CD4-positive, alpha-beta T cell (primary cell): ENCODE measurements at regions of chr10 and their contacts with region 1.

Region 1: GRCh38 chr10:100373298-100374136 is 26.5 kb downstream of the SCD start:
- DNase-seq: peak; percentile 58 to 91 (median 73)
- ATAC-seq: peak; percentile 69
- H3K4me3 ChIP-seq: peak overlapping the region; percentile 81
- H3K4me3 Mint-ChIP-seq: no peak overlapping the region
- H3K27ac ChIP-seq: peak overlapping the region; percentile 78 to 90
- H3K27ac Mint-ChIP-seq: no peak overlapping the region
- H3K4me1 ChIP-seq: peaks cover 49% of the 10 kb centered on the region
- H3K4me1 Mint-ChIP-seq: peaks cover 24% of the 10 kb centered on the region
- H3K27me3 ChIP-seq: no peaks in the 10 kb centered on the region
- H3K27me3 Mint-ChIP-seq: no peaks in the 10 kb centered on the region
- CTCF ChIP-seq: no peak

Region 2: DNA sequence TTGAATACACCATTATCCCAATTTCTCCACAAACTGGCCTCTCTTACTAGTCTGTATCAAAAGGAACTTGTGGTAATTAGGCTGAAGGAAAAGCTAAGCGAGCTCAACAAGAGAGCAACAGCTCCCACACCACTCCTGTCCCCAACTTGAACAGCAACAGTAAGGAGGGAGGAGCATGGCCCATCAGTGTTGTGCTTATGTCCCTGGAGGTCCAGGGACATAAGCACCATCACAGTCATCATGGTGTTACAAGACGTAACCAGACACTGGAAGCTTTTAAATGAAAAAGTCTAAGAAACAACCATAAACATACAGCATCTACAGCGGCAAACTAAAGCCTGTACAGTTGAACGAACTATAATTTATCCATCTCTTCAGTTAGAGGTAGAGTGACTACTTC is 188.7 kb before region 1 on chr10:
- CTCF ChIA-PET with region 1: no interaction called
- POLR2A ChIA-PET with region 1: no interaction called
- intact Hi-C with region 1: no loop called
- DNase-seq: peak in 2 of 14 experiments; percentile 21 to 25
- ATAC-seq: no peak
- H3K4me3 ChIP-seq: peak overlapping the region; percentile 80
- H3K4me3 Mint-ChIP-seq: peak overlapping the region; percentile 98
- H3K27ac ChIP-seq: peak overlapping the region; percentile 72 to 81
- H3K27ac Mint-ChIP-seq: peak overlapping the region; percentile 92
- H3K4me1 ChIP-seq: peaks cover 22% of the 10 kb centered on the region
- H3K4me1 Mint-ChIP-seq: peaks cover 78% of the 10 kb centered on the region
- H3K27me3 ChIP-seq: no peaks in the 10 kb centered on the region
- H3K27me3 Mint-ChIP-seq: no peaks in the 10 kb centered on the region
- CTCF ChIP-seq: no peak

Region 3: DNA sequence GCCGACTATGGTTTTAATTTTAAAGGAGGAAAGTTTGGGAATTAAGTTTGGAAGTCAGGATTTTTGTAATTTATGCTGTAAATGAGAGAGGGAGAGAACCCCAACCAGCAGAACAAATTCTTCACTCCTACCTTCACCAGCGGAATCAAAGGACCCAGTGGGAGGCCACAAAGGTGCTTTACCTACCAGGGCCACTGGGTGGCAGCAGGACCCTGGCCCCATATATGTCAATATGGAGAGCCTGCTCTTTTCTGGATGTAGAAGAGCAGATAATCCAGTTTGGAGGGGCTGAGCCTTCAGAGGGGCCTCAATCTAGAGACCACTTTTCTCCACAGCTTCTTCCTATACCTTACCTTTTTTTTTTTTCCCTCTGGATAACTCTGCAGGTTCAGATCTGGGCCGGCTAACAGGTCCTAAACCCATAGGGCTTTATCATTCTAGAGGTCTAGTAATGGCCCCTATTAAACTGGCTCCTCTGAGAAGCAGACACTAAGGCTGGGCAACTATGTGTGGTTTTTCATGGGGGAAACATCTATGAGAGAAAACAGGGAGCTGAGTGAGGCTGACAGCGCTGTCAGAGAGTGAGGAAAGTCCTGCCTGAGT is 35.0 kb before region 1 on chr10:
- CTCF ChIA-PET with region 1: interaction called, 4 read pairs
- POLR2A ChIA-PET with region 1: no interaction called
- intact Hi-C with region 1: loop called in 1 of 2 experiments (anchors 2 kb)
- DNase-seq: peak; percentile 66 to 85 (median 76)
- ATAC-seq: peak; percentile 94
- H3K4me3 ChIP-seq: no peak overlapping the region
- H3K4me3 Mint-ChIP-seq: no peak overlapping the region
- H3K27ac ChIP-seq: no peak overlapping the region
- H3K27ac Mint-ChIP-seq: no peak overlapping the region
- H3K4me1 ChIP-seq: no peaks in the 10 kb centered on the region
- H3K4me1 Mint-ChIP-seq: no peaks in the 10 kb centered on the region
- H3K27me3 ChIP-seq: no peaks in the 10 kb centered on the region
- H3K27me3 Mint-ChIP-seq: peaks cover 4% of the 10 kb centered on the region
- CTCF ChIP-seq: peak; percentile 87

Region 4: DNA sequence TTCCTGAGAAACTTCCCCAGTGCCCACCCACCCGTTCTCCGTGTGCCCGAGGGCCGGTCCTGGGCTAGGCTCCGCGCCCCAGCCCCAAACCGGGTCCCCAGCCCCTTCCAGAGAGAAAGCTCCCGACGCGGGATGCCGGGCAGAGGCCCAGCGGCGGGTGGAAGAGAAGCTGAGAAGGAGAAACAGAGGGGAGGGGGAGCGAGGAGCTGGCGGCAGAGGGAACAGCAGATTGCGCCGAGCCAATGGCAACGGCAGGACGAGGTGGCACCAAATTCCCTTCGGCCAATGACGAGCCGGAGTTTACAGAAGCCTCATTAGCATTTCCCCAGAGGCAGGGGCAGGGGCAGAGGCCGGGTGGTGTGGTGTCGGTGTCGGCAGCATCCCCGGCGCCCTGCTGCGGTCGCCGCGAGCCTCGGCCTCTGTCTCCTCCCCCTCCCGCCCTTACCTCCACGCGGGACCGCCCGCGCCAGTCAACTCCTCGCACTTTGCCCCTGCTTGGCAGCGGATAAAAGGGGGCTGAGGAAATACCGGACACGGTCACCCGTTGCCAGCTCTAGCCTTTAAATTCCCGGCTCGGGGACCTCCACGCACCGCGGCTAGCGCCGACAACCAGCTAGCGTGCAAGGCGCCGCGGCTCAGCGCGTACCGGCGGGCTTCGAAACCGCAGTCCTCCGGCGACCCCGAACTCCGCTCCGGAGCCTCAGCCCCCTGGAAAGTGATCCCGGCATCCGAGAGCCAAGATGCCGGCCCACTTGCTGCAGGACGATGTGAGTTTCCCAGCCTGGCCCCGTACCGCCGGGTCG is 26.6 kb before region 1 on chr10 and contains the start of gene SCD:
- CTCF ChIA-PET with region 1: interaction called, 3 read pairs
- POLR2A ChIA-PET with region 1: interaction called, 15 read pairs
- intact Hi-C with region 1: loop called (anchors 1 to 2 kb)
- DNase-seq: peak; percentile 48 to 91 (median 62)
- ATAC-seq: peak; percentile 83
- H3K4me3 ChIP-seq: peak within 1 kb of the TSS; percentile 64
- H3K4me3 Mint-ChIP-seq: peak within 1 kb of the TSS; percentile 86
- H3K27ac ChIP-seq: no peak within 1 kb of the TSS
- H3K27ac Mint-ChIP-seq: no peak within 1 kb of the TSS
- H3K4me1 ChIP-seq: peaks cover 18% of the 10 kb centered on the region
- H3K4me1 Mint-ChIP-seq: peaks cover 7% of the 10 kb centered on the region
- H3K27me3 ChIP-seq: no peaks in the 10 kb centered on the region
- H3K27me3 Mint-ChIP-seq: peaks cover 4% of the 10 kb centered on the region
- CTCF ChIP-seq: no peak
- total RNA-seq, gene SCD: 1.7 TPM